WTC11 (cell line): ENCODE measurements at regions of chr20 and their contacts with region 1.

Region 1: DNA sequence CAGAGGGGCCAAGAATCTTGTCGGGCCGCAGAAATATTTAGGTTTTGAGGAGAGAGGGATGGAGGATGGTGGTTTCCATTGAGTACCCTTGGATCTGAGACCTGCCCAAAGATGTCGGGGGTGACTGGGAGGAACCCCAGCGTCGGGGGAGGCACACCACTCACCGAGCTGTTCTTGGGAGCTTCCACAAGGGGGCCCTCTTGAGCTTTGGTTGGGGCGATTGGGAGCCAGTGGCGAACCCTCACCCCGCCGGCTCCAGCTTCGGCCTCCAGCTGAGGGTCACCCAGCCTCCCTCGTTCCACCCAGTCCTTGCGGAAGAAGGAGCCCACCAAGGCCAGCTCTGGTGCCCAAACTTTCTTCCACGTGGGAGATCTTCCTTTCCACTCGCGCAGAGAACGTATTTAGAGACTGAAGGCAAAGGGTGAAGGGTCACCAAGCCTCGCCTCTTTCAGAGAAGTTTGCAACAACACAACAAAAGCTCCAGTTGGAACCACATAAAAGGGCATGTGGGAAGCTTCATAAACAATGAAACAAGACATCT is 33.6 kb downstream of the APCDD1L start:
- DNase-seq: peak; percentile 86
- ATAC-seq: peak; percentile 96
- H3K4me3 Mint-ChIP-seq: peak overlapping the region; percentile 31; the same call in 1 of the 2 replicates
- H3K27ac Mint-ChIP-seq: no peak overlapping the region
- H3K4me1 Mint-ChIP-seq: peaks cover 10% of the 10 kb centered on the region
- H3K27me3 Mint-ChIP-seq: peaks cover 4% of the 10 kb centered on the region; the same call in 1 of the 2 replicates
- CTCF ChIP-seq: peak; percentile 92

Region 2: GRCh38 chr20:58432186-58432954 is 49.2 kb before region 1 on chr20:
- CTCF ChIA-PET with region 1: no interaction called
- POLR2A ChIA-PET with region 1: no interaction called
- DNase-seq: no peak
- ATAC-seq: no peak
- H3K4me3 Mint-ChIP-seq: no peak overlapping the region
- H3K27ac Mint-ChIP-seq: no peak overlapping the region
- H3K4me1 Mint-ChIP-seq: peaks cover 40% of the 10 kb centered on the region
- H3K27me3 Mint-ChIP-seq: no peaks in the 10 kb centered on the region
- CTCF ChIP-seq: no peak

Region 3: GRCh38 chr20:58467572-58468527 is 13.7 kb before region 1 on chr20:
- CTCF ChIA-PET with region 1: interaction called, 17 read pairs
- POLR2A ChIA-PET with region 1: no interaction called
- DNase-seq: no peak
- ATAC-seq: peak; percentile 22; the same call in 1 of the 2 replicates
- H3K4me3 Mint-ChIP-seq: no peak overlapping the region
- H3K27ac Mint-ChIP-seq: no peak overlapping the region
- H3K4me1 Mint-ChIP-seq: 0 out of 2 replicates have a peak, but pooled peaks cover 4% of the 10 kb centered on the region
- H3K27me3 Mint-ChIP-seq: no peaks in the 10 kb centered on the region
- CTCF ChIP-seq: no peak

Region 4: DNA sequence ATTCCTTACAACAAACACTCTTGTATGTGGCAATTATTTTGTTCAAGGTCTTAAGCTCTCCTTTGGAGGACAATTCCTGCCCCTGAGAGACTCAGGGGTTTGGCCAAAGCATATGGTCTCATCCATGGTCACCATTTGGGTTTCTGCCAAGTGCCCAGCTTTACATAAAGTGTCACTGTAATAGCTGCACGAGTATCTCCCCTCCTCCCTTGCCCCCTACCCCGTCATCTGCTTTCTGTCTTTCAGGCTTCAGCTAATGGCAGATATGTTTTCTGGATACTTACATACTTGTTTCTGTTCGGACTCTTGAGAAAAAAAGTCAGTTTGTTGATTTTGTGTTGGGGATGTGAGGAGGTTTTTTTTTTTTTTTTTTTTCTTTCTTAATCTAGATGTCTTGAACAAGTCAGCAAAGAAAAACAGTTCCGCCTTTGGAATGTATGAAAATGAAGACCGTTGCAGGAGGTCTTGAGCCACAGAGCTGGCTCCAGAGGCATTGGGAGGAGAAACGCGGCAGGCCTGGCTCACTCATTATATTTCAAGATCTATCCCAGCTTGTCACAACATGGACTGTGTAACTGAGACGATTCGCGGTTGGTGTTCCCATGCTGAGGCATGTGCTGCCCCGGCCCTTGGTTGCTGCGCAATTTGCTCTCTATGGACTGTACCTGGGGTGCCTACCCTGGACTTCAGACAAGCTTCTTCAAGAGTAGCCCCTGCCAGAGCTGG is 137.0 kb after region 1 on chr20:
- CTCF ChIA-PET with region 1: interaction called, 19 read pairs
- POLR2A ChIA-PET with region 1: no interaction called
- DNase-seq: no peak
- ATAC-seq: no peak
- H3K4me3 Mint-ChIP-seq: no peak overlapping the region
- H3K27ac Mint-ChIP-seq: no peak overlapping the region
- H3K4me1 Mint-ChIP-seq: peaks cover 21% of the 10 kb centered on the region
- H3K27me3 Mint-ChIP-seq: peaks cover 45% of the 10 kb centered on the region
- CTCF ChIP-seq: no peak

Region 5: GRCh38 chr20:58650776-58651558 is 169.4 kb after region 1 on chr20 and contains the start of gene STX16:
- CTCF ChIA-PET with region 1: interaction called, 119 read pairs
- POLR2A ChIA-PET with region 1: interaction called, 15 read pairs
- DNase-seq: peak; percentile 89
- ATAC-seq: peak; percentile 76
- H3K4me3 Mint-ChIP-seq: peak within 1 kb of the TSS; percentile 90
- H3K27ac Mint-ChIP-seq: peak within 1 kb of the TSS; percentile 95
- H3K4me1 Mint-ChIP-seq: peaks cover 34% of the 10 kb centered on the region
- H3K27me3 Mint-ChIP-seq: no peaks in the 10 kb centered on the region; the same call in 1 of the 2 replicates
- CTCF ChIP-seq: peak; percentile 42
- total RNA-seq, gene STX16: 89.1 to 116 TPM (median 113 TPM) in 3 replicates

Region 6: GRCh38 chr20:58669287-58670006 is 187.9 kb after region 1 on chr20:
- CTCF ChIA-PET with region 1: interaction called, 15 read pairs
- POLR2A ChIA-PET with region 1: interaction called, 3 read pairs
- DNase-seq: peak; percentile 73
- ATAC-seq: peak; percentile 78
- H3K4me3 Mint-ChIP-seq: peak overlapping the region; percentile 49
- H3K27ac Mint-ChIP-seq: peak overlapping the region; percentile 100
- H3K4me1 Mint-ChIP-seq: peaks cover 81% of the 10 kb centered on the region
- H3K27me3 Mint-ChIP-seq: no peaks in the 10 kb centered on the region
- CTCF ChIP-seq: no peak

Region 7: DNA sequence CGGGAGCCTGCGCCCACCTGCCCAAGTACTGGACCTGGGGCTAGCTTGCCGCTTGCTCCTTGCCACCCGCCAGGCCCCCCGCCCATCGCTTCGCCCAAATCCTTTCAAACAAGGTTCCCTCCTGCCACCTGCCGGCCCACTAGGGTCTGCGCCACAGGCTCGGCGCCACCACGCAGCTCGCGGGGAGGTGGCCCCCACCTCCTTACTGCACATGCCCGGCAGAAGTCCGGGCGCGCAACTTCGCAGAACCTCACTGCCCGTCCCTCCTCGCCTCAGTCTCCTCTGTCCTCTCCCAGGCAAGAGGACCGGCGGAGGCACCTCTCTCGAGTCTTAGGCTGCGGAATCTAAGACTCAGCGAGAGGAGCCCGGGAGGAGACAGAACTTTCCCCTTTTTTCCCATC is 357.9 kb after region 1 on chr20:
- CTCF ChIA-PET with region 1: interaction called, 63 read pairs
- POLR2A ChIA-PET with region 1: interaction called, 6 read pairs
- DNase-seq: peak; percentile 75
- ATAC-seq: peak; percentile 33
- H3K4me3 Mint-ChIP-seq: peak overlapping the region; percentile 91
- H3K27ac Mint-ChIP-seq: peak overlapping the region; percentile 90; the same call in 1 of the 2 replicates
- H3K4me1 Mint-ChIP-seq: peaks cover 75% of the 10 kb centered on the region
- H3K27me3 Mint-ChIP-seq: peaks cover 17% of the 10 kb centered on the region
- CTCF ChIP-seq: peak; percentile 30; the same call in 1 of the 2 replicates